ENCODE measurements at regions of chr19 and their contacts with region 1.

Region 1: GRCh38 chr19:53195265-53195903 is 2.2 kb upstream of the ZNF665 start:
- DNase-seq: peak; percentile 88
- H3K4me3 Mint-ChIP-seq: no peak overlapping the region
- H3K27ac Mint-ChIP-seq: peak overlapping the region; percentile 37
- H3K4me1 Mint-ChIP-seq: peaks cover 31% of the 10 kb centered on the region
- H3K27me3 Mint-ChIP-seq: peaks cover 2% of the 10 kb centered on the region

Region 2: GRCh38 chr19:53103198-53103944 is 92.0 kb before region 1 on chr19 and contains the start of gene ZNF160:
- CTCF ChIA-PET with region 1: no interaction called
- intact Hi-C with region 1: loop called (anchors 1 kb)
- DNase-seq: peak; percentile 99
- H3K4me3 Mint-ChIP-seq: peak within 1 kb of the TSS; percentile 82
- H3K27ac Mint-ChIP-seq: peak within 1 kb of the TSS; percentile 84
- H3K4me1 Mint-ChIP-seq: peaks cover 22% of the 10 kb centered on the region
- H3K27me3 Mint-ChIP-seq: no peaks in the 10 kb centered on the region
- total RNA-seq, gene ZNF160: 23.5 to 25.2 TPM

Region 3: DNA sequence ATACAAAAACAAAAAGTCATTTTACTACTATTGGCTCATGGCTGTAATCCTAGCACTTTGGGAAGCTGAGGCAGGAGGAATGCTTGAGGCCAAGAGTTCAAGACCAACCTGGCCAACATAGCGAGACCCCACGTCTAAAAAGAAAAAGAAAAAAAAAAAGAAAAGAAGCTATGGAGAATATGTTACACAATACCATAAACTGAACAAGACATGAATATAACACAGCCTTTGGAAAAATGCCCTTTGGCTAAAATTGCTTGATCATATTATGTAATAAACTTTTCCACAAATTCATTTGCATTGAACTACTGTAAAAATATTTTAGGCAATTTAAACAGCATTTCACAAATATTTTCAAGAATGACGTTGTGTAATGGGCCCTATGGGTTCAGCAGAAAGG is 59.0 kb before region 1 on chr19:
- CTCF ChIA-PET with region 1: no interaction called
- intact Hi-C with region 1: no loop called
- DNase-seq: no peak
- H3K4me3 Mint-ChIP-seq: no peak overlapping the region
- H3K27ac Mint-ChIP-seq: no peak overlapping the region
- H3K4me1 Mint-ChIP-seq: peaks cover 7% of the 10 kb centered on the region
- H3K27me3 Mint-ChIP-seq: peaks cover 8% of the 10 kb centered on the region

Region 4: GRCh38 chr19:53333463-53334449 is 138.4 kb after region 1 on chr19 and contains the start of gene ZNF845:
- CTCF ChIA-PET with region 1: no interaction called
- intact Hi-C with region 1: loop called (anchors 10 kb)
- DNase-seq: peak; percentile 97
- H3K4me3 Mint-ChIP-seq: peak within 1 kb of the TSS; percentile 97
- H3K27ac Mint-ChIP-seq: peak within 1 kb of the TSS; percentile 87
- H3K4me1 Mint-ChIP-seq: peaks cover 13% of the 10 kb centered on the region
- H3K27me3 Mint-ChIP-seq: peaks cover 6% of the 10 kb centered on the region
- total RNA-seq, gene ZNF845: 4.3 to 4.5 TPM

Region 5: GRCh38 chr19:53431399-53432087 is 236.2 kb after region 1 on chr19 and contains the start of gene ZNF761:
- CTCF ChIA-PET with region 1: no interaction called
- intact Hi-C with region 1: loop called (anchors 1 kb)
- DNase-seq: peak; percentile 97
- H3K4me3 Mint-ChIP-seq: peak within 1 kb of the TSS; percentile 83
- H3K27ac Mint-ChIP-seq: peak within 1 kb of the TSS; percentile 88
- H3K4me1 Mint-ChIP-seq: peaks cover 21% of the 10 kb centered on the region
- H3K27me3 Mint-ChIP-seq: no peaks in the 10 kb centered on the region
- total RNA-seq, gene ZNF761: 8.7 to 10.0 TPM

Region 6: GRCh38 chr19:53467485-53468262 is 272.3 kb after region 1 on chr19 and contains the start of gene ZNF813:
- CTCF ChIA-PET with region 1: no interaction called
- intact Hi-C with region 1: no loop called
- DNase-seq: peak; percentile 98
- H3K4me3 Mint-ChIP-seq: peak within 1 kb of the TSS; percentile 88
- H3K27ac Mint-ChIP-seq: peak within 1 kb of the TSS; percentile 83
- H3K4me1 Mint-ChIP-seq: peaks cover 20% of the 10 kb centered on the region
- H3K27me3 Mint-ChIP-seq: peaks cover 21% of the 10 kb centered on the region
- total RNA-seq, gene ZNF813: 4.5 to 5.6 TPM

Region 7: GRCh38 chr19:53867225-53868090 is 672.1 kb after region 1 on chr19 and contains the start of gene MYADM:
- CTCF ChIA-PET with region 1: no interaction called
- intact Hi-C with region 1: loop called (anchors 10 kb)
- DNase-seq: peak; percentile 99
- H3K4me3 Mint-ChIP-seq: peak within 1 kb of the TSS; percentile 88
- H3K27ac Mint-ChIP-seq: peak within 1 kb of the TSS; percentile 82
- H3K4me1 Mint-ChIP-seq: peaks cover 36% of the 10 kb centered on the region
- H3K27me3 Mint-ChIP-seq: no peaks in the 10 kb centered on the region
- total RNA-seq, gene MYADM: 13.6 to 13.9 TPM

Measured in activated naive CD4-positive, alpha-beta T cell treated with anti-CD3 and anti-CD28 coated beads for 36 hours (primary cell).